Ovary (tissue), 10 donors: ENCODE measurements at regions of chr20 and their contacts with region 1.

Region 1: DNA sequence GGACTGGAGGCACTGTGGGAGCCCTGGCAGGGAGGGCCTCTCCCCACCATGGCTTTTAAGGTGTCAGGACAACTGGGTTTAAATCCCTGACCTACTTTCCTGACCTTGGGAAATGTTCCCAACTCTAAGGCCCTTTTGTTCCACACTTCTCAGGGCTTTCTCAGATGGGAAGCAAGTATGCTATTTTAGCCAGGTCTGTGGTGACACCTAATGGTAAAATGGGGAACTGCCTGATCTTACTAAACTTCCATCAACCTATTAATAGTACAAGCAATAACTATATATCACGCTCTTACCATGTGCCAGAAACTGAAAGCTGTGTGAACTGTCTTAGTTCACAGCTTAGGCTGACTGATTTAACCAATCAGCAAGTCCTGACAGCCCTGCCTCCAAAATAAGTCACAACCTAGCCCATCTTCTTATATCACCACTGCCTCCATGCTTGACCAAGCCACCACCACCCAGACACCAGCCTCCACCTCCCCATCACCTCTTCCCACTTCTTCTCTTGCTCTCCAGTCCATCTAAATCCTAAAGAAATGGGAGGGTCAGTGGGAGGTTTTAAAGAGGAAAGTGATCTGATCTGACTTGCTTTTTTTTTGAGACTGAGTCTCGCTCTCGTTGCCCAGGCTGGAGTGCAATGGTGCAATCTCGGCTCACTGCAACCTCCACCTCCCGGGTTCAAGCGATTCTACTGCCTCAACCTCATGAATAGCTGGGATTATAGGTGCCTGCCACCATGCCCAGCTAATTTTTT is 6.9 kb upstream of the BLCAP start:
- DNase-seq: peak; percentile 30 to 61 (median 34)
- H3K4me3 ChIP-seq: no peak overlapping the region
- H3K27ac ChIP-seq: no peak overlapping the region
- H3K4me1 ChIP-seq: no peaks in the 10 kb centered on the region
- H3K27me3 ChIP-seq: no peaks in the 10 kb centered on the region
- CTCF ChIP-seq: peak; percentile 49 to 94 (median 91)
- EP300 ChIP-seq: no peak
- POLR2A ChIP-seq: no peak

Region 2: DNA sequence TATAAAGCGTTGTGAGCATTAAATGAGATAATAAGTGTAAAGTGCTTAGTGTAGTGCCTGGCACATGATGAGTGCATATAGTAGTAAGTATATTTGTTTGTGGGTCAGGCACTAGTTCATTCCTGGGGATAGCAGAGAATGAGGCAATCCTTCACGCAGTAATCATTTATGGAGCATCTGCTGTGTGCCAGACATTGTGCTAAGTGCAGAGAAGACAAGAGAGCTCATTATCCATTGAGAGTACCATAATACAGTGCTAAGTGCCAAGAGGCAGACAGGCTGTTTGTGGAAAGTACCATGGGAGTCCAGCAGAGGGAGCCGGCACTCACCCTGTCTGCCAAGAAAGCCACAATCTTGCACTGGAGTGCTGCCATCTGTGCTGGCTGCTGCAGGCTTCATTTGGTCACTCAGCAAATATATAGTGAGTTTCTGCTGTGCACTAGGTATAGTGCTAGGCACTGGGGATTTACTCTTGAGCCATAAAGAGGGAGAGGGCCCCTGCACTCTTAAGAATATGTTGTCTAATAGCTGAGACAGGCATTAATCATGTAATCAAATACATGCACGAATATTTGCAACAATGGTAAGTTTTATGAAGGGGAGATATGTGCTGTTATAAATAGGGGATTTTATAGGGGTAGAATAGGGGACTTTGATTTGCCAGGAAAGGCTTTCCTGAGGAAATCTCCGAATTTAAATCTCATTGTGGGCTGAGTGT is 342.3 kb before region 1 on chr20:
- intact Hi-C with region 1: loop called in 2 of 4 experiments (anchors 5 kb)
- DNase-seq: peak; percentile 84 to 92 (median 90)
- H3K4me3 ChIP-seq: no peak overlapping the region
- H3K27ac ChIP-seq: no peak overlapping the region
- H3K4me1 ChIP-seq: peaks cover 1% of the 10 kb centered on the region
- H3K27me3 ChIP-seq: no peaks in the 10 kb centered on the region
- CTCF ChIP-seq: peak; percentile 79 to 90 (median 84)
- EP300 ChIP-seq: no peak
- POLR2A ChIP-seq: no peak

Region 3: DNA sequence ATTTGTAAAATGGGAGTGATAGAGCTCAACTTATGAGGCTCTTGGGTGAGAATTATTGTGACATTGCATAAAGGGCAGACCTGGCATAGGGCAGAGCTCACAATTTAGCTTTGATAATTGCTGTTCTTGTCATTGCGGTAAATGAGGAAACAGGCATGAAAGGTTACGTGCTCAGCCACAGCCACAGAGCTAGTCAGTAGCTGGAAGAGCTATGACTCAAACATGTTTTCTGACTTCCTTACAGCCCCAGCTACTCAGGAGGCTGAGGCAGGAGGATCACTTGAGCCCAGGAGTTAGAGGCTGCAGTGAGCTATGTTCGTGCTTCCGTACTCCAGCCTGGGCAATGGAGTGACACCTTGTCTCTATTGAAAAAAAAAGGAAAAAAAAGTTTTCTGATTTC is 269.4 kb before region 1 on chr20:
- intact Hi-C with region 1: loop called (anchors 5 kb)
- DNase-seq: no peak
- H3K4me3 ChIP-seq: no peak overlapping the region
- H3K27ac ChIP-seq: no peak overlapping the region
- H3K4me1 ChIP-seq: no peaks in the 10 kb centered on the region
- H3K27me3 ChIP-seq: no peaks in the 10 kb centered on the region
- CTCF ChIP-seq: no peak
- EP300 ChIP-seq: no peak
- POLR2A ChIP-seq: no peak

Region 4: DNA sequence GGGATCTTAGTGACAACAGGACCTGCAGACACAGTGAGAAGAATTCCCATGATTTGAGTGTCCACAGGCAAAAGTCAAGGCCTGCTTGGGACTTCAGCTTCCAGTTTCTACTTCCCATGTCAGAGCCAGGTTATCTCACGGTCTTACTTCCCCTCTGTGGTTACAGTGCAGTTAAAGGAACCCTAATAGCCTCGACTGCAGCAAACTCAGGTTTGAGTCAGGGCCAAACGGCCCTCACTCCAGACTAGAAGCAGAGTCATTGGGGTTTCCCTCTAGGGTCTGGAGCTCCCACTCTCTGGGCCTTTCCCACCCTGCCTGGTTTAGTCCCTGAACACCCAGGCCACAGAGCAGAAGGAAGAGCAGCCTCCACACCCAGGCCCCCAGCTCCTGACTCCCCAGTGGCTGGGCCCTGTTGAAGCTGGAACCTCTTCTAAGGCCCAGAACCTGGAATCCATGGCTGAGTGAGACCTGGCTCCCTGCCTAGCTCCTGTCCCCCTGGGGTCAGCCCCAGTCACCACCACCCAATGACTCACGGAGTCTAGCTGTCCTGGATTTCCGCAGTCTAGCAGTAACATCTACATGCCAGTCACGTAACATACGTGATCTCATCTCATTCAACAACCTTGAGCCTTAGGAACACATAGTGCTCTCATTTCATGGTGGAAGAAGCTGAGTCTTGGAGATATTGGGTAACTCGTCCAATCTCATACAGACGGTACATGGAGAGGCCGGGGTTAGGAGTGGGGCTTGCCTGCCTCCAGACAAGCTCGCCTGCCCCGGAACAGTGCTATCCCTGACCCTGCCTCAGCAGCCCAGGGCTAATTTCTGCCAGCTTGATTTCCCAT is 263.8 kb before region 1 on chr20:
- intact Hi-C with region 1: loop called (anchors 5 kb)
- DNase-seq: peak in 1 of 5 donors; percentile 21
- H3K4me3 ChIP-seq: no peak overlapping the region
- H3K27ac ChIP-seq: no peak overlapping the region
- H3K4me1 ChIP-seq: no peaks in the 10 kb centered on the region
- H3K27me3 ChIP-seq: no peaks in the 10 kb centered on the region
- CTCF ChIP-seq: no peak
- EP300 ChIP-seq: no peak
- POLR2A ChIP-seq: no peak

Region 5: DNA sequence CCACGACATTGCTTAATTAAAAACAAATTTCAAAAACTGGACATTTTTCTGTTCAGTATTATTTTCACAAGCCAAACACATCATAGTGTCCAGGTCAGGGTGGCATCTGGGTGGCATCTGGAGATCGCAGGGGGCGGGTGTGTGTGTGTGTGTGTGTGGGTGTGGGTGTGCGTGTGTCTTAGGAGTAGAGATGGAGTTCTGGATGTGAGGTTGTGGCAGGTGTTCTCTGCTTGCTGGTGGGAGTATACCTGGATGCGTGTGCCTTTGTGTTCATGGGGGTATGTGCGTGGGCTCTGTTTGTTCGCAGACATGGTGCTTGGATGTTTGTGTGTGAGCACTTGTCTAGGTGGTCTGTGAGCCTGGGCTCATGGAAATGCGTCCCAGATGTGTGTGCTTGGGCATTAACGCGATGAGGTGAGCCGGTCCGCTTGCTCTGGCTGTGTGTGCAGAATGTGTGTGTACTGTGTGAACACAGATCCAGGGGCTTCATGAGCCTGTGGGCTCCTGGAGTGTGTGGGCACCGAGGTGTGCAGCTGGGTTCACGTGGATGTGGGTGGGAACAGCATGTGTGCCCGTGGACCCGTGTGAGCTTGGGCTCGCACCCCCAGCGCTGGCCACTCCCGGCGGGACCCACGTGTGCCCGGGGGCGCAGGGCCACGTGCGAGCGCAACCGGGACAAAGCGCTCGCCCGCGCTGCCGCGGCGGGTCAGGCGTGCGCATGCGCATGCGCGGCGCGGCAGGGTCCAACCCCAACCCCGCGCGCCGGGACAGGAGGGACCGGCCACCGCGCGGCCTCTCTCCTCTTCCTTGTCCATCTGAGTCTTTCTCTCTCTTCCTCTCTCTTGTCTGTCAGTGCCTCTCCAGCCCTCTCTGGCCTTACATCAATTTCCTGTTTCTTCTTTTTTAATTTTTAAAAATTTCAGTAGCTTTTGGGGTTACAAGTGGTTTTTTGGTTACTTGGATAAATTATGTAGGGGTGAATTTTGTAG is 128.3 kb before region 1 on chr20:
- intact Hi-C with region 1: loop called in 2 of 4 experiments (anchors 5 to 10 kb)
- DNase-seq: peak; percentile 47 to 72 (median 55)
- H3K4me3 ChIP-seq: peak overlapping the region; percentile 16
- H3K27ac ChIP-seq: no peak overlapping the region
- H3K4me1 ChIP-seq: peaks cover 2% of the 10 kb centered on the region
- H3K27me3 ChIP-seq: no peaks in the 10 kb centered on the region
- CTCF ChIP-seq: no peak
- EP300 ChIP-seq: no peak
- POLR2A ChIP-seq: no peak